ENCODE measurements at regions of chr2 and their contacts with region 1.

Region 1: GRCh38 chr2:28452534-28453081 is 43.3 kb upstream of the PLB1 start:
- DNase-seq: peak; percentile 65 to 70
- ATAC-seq: peak; percentile 75 to 92
- H3K4me3 ChIP-seq: no peak overlapping the region
- H3K27ac ChIP-seq: peak overlapping the region; percentile 70 to 87
- H3K4me1 ChIP-seq: peaks cover 44% of the 10 kb centered on the region
- CTCF ChIP-seq: peak; percentile 94
- EP300 ChIP-seq: no peak
- POLR2A ChIP-seq: no peak
- RAD21 ChIP-seq: peak; percentile 98 to 99

Region 2: DNA sequence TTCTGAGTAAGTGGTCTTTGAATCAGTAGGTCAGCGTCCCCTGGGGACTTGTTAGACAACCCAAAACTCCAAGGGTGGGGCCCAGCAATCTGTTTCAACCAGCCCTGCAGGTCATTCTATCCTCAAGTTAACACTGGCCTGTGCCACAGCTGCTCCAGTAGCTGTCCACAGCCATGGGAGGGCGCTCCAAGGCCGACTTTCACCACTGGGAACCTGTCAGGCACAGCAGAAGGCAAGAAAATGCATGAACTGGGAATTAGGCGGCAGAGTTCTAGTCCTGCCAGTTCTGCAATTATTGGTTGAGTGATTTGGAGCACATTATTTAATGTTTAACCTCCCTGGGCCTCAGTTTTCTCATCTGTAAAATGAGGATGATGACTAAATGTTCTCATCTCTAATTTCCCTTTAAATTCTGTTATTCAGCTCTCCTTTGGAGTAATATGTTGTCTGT is 698.4 kb before region 1 on chr2:
- CTCF ChIA-PET with region 1: interaction called, 16 read pairs
- POLR2A ChIA-PET with region 1: no interaction called
- DNase-seq: peak; percentile 53 to 85
- ATAC-seq: peak; percentile 97 to 99
- H3K4me3 ChIP-seq: no peak overlapping the region
- H3K27ac ChIP-seq: peak overlapping the region; percentile 74 to 82
- H3K4me1 ChIP-seq: peaks cover 26% of the 10 kb centered on the region
- CTCF ChIP-seq: peak; percentile 96
- EP300 ChIP-seq: no peak
- POLR2A ChIP-seq: no peak
- RAD21 ChIP-seq: peak; percentile 98 to 100

Region 3: DNA sequence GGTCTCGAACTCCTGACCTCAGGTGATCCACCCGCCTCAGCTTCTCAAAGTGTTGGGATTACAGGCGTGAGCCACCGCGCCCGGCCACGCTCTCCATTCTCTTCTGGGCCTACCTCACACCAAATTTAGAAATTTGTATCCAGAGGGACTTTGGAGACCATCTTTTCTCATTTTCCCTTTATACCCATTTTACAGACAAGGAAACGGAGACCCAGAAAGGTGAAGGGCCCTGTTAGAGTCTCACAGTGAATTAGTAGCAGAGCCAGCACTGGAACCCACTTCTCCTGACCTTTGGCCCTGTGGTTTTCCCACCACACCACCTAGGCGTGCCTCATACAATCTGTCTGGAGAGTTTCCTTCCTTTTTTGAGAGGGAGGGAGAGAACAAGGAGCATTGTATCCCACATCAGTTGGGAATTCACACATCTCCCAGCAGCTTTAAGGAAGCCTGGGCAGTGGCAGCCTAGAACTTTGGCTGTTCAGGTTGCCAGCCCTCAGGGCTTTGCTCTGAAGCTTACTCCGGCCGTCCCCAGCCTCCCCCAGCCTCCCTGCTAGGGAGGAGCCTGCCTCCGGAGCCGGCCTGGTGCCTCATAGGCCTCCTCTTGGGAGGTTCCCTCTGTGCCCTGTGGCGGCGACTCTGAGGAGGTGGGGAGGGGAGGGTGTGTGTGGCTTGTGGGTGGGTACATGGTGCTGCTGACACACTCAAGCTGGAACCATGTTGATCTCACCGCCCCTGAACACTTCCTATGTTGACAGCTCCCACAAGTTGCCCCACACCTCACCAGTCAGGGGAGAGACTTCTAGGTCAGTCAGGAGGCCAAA is 46.1 kb before region 1 on chr2:
- CTCF ChIA-PET with region 1: interaction called, 17 read pairs
- POLR2A ChIA-PET with region 1: no interaction called
- DNase-seq: no peak
- ATAC-seq: peak in 1 of 2 experiments; percentile 5; a peak in 3 of 6 replicates
- H3K4me3 ChIP-seq: no peak overlapping the region
- H3K27ac ChIP-seq: peak overlapping the region in 1 of 2 experiments; percentile 79; a peak in 3 of 6 replicates
- H3K4me1 ChIP-seq: peaks cover 89% of the 10 kb centered on the region
- CTCF ChIP-seq: no peak
- EP300 ChIP-seq: no peak
- POLR2A ChIP-seq: no peak
- RAD21 ChIP-seq: no peak

Region 4: GRCh38 chr2:28423856-28424605 is 28.6 kb before region 1 on chr2:
- CTCF ChIA-PET with region 1: interaction called, 17 read pairs
- POLR2A ChIA-PET with region 1: no interaction called
- DNase-seq: no peak
- ATAC-seq: peak; percentile 8; a peak in 3 of 6 replicates
- H3K4me3 ChIP-seq: no peak overlapping the region
- H3K27ac ChIP-seq: peak overlapping the region in 1 of 2 experiments; percentile 5; a peak in 2 of 6 replicates
- H3K4me1 ChIP-seq: peaks cover 31% of the 10 kb centered on the region; the same call in 2 of the 3 replicates
- CTCF ChIP-seq: no peak
- EP300 ChIP-seq: no peak
- POLR2A ChIP-seq: no peak
- RAD21 ChIP-seq: no peak

Region 5: DNA sequence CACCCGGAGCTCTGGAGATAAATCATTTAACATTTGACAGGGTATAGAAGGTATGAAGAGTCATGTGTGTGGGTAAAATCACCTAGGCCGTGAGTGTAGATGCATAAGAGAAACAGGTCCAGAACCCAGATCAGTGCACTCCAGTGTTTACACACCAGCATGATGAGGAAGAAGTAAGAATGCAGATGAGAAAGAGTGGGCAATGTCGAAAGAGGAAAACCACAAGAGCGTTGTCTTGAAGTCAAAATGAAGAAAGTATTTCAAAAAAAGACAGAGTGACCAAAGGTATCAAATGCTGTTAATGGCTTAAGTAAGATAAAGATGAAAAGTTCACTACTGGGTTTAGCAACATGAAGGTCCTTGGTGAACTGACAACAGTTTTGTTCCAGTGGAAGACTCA is 11.3 kb after region 1 on chr2:
- CTCF ChIA-PET with region 1: interaction called, 19 read pairs
- POLR2A ChIA-PET with region 1: no interaction called
- DNase-seq: no peak
- ATAC-seq: no peak
- H3K4me3 ChIP-seq: no peak overlapping the region
- H3K27ac ChIP-seq: no peak overlapping the region
- H3K4me1 ChIP-seq: no peaks in the 10 kb centered on the region
- CTCF ChIP-seq: no peak
- EP300 ChIP-seq: no peak
- POLR2A ChIP-seq: no peak
- RAD21 ChIP-seq: no peak

Measured in A549 (cell line).